ENCODE measurements at regions of chr18 and their contacts with region 1.

Region 1: DNA sequence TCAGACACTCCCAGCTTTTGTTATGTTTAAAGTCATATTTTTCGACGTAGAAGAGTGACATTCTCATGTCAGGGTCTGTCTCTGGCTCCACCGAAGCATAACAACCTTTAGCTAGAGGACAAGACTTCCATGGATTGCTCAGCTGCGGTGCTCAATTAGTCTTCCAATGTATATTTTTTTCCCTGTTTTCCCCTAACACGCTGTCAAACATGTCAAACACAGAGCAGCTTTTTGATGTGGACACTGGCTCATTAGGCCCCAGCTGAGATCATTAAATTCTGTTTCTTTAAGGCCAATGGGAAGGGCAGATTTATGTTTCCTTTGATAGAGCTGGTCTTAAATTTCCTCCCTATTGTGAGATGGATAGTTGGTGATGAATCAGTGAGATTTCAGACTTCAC is 525.4 kb downstream of the PIK3C3 start:
- DNase-seq: no peak
- H3K4me3 ChIP-seq: no peak overlapping the region
- H3K27ac ChIP-seq: no peak overlapping the region
- H3K4me1 ChIP-seq: no peaks in the 10 kb centered on the region
- H3K27me3 ChIP-seq: no peaks in the 10 kb centered on the region
- CTCF ChIP-seq: no peak
- POLR2A ChIP-seq: no peak

Region 2: GRCh38 chr18:42437646-42438045 is 42.8 kb before region 1 on chr18:
- CTCF ChIA-PET with region 1: no interaction called
- POLR2A ChIA-PET with region 1: no interaction called
- dilution Hi-C with region 1: no loop called
- intact Hi-C with region 1: loop called (anchors 10 kb)
- DNase-seq: no peak
- H3K4me3 ChIP-seq: no peak overlapping the region
- H3K27ac ChIP-seq: no peak overlapping the region
- H3K4me1 ChIP-seq: no peaks in the 10 kb centered on the region
- H3K27me3 ChIP-seq: no peaks in the 10 kb centered on the region
- CTCF ChIP-seq: no peak
- POLR2A ChIP-seq: no peak

Region 3: GRCh38 chr18:42792731-42793130 is 312.3 kb after region 1 on chr18:
- CTCF ChIA-PET with region 1: no interaction called
- POLR2A ChIA-PET with region 1: no interaction called
- dilution Hi-C with region 1: no loop called
- intact Hi-C with region 1: no loop called
- DNase-seq: no peak
- H3K4me3 ChIP-seq: no peak overlapping the region
- H3K27ac ChIP-seq: no peak overlapping the region
- H3K4me1 ChIP-seq: no peaks in the 10 kb centered on the region
- H3K27me3 ChIP-seq: no peaks in the 10 kb centered on the region
- CTCF ChIP-seq: no peak
- POLR2A ChIP-seq: no peak